ENCODE measurements at regions of chr1 and their contacts with region 1.

Region 1: DNA sequence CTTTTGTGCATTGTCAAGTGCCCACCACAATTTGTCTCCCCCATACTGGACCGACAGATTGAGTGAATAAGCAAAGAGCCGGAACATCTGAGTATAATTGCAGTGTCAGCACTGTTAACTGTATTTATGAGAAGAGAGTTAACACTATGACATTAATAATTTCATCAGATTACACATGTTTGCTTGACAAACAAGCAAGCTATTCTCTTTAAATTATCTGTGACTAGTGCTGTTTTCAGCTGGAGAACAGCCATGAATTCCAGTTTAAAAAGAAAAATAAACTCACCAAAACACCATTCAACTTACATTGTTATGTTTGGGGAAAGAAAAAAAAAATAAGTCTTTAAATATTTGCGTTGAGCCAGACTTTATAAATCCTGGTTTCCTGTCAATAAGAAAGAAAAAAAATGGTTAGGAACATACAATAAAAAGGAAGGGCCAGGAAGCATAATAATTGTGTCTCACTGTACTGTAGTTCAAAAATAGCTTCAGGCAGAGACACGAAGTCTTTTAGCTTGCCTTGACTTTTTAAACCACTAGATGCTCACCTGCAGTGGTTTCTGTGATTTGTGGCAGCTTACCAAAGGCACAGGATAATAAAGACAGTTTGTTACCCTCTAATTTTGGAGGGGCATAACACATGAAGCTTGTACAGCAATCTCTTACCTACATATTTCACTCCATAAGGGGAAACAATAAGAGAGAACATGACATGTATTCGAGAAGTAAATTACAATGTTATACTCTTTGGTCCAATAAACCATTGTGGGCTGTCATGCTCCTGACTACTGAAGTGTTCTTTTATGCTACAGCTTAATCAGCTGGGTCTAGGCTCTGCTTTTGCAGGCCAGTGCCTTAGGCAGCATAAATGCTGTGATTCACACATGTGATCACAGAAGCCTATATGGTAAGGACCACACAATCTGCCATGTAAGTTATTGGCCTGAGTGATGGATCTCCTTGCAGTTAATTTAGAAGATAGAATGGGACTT is 302.0 kb upstream of the ADGRL2 start:
- DNase-seq: no peak
- ATAC-seq: peak; percentile 60

Region 2: GRCh38 chr1:81430955-81431623 is 67.7 kb before region 1 on chr1:
- intact Hi-C with region 1: loop called (anchors 5 kb)
- DNase-seq: no peak
- ATAC-seq: peak; percentile 26

Region 3: DNA sequence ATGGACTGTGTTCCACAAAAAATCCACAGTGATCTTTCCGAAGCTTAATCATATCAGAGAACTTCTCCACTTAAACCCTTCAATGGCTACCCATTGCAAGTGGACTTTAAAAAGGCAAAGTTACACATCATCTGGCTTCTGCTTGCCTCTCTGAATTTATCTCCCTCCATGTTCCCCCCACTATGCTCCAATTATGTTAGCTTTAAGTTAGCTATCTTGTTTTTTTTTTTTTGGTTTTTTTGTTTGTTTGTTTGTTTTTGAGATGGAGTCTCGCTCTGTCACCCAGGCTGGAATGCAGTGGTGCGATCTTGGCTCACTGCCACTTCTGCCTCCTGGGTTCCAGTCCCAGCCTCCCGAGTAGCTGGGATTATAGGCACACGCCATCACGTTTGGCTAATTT is 135.5 kb after region 1 on chr1:
- intact Hi-C with region 1: no loop called
- DNase-seq: no peak
- ATAC-seq: no peak